ENCODE measurements at regions of chr3 and their contacts with region 1.

Region 1: DNA sequence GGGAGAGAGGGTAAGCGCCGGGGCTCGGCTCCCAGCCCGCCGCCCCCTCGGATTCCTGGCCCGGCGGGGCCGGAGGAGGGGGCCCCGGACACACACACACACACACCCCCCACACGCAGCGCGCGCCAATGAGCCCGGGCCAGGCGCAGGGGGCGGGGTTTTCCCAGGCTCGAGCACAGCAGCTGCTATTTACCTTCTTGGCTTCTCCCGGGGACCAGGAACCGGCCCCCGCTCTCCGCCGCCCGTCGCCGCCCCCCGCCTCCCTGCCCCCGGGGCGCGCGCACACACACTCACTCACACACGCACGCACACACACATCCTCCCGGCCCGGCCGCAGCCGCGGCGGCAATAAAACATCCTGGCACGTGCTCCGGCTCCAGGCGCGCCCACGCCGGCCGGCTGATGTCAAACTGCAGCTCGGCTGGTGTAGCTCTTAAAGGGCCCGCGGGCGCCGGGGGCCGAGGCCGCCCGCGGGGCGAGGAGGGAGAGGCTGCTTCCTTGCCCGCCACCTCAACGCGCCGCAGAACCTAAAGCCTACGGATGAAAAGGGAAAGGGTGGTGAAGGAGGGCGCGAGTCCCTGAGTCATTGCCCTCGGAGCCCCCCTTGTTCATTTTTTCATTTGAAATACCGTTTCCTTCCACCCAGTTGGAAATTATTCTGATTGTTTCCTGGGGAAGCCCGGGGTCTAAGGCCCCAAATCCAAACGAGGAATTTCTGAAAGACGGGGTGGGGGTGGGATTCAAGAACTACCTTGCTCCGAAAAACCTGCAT is 1.0 kb upstream of the HES1 start:
- DNase-seq: peak; percentile 66 to 84 (median 82)
- ATAC-seq: peak; percentile 79
- H3K4me3 ChIP-seq: peak overlapping the region; percentile 53
- H3K4me3 Mint-ChIP-seq: peak overlapping the region; percentile 84 to 93 (median 90)
- H3K27ac ChIP-seq: peak overlapping the region; percentile 8
- H3K27ac Mint-ChIP-seq: peak overlapping the region in 8 of 9 donors; percentile 79 to 94 (median 92)
- H3K4me1 ChIP-seq: peaks cover 25 to 42% of the 10 kb centered on the region in 2 donors
- H3K4me1 Mint-ChIP-seq: peaks cover 41 to 66% (median 50%) of the 10 kb centered on the region in 7 donors
- H3K27me3 ChIP-seq: peaks cover 6 to 8% of the 10 kb centered on the region in 2 donors
- H3K27me3 Mint-ChIP-seq: peaks cover 0 to 80% (median 34%) of the 10 kb centered on the region in 5 donors

Region 2: DNA sequence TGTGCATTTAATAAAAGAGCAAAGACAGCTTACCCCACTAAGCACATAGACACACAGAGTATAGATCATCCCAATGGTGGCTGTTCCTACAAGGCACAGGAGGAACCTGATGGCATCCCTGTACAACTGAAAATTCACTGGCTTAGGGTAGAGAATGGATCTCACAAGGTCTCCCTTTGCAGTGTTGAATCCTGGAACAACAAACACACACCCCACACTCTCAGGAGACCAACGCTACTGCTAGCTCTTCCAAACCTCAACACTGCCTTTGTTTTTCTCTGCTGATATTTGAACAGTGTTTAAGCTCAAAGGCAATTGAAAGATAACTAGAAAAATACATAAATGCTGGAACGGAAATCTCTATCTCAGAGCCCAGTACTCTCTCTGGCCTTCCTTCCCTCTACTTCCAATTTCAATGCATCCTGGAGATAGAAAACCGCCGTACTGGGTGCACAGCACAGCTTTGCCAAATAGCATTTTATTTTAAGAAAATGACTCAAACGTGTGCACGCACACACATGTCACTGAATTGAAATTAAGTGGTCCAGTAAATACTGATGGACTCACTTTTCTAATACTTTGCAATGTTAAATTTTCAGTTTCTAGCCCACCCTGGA is 668.8 kb before region 1 on chr3:
- CTCF ChIA-PET with region 1: no interaction called
- POLR2A ChIA-PET with region 1: no interaction called
- intact Hi-C with region 1: loop called in 1 of 2 experiments (anchors 5 kb)
- DNase-seq: no peak
- ATAC-seq: no peak
- H3K4me3 ChIP-seq: no peak overlapping the region
- H3K4me3 Mint-ChIP-seq: no peak overlapping the region
- H3K27ac ChIP-seq: no peak overlapping the region
- H3K27ac Mint-ChIP-seq: no peak overlapping the region
- H3K4me1 ChIP-seq: no peaks in the 10 kb centered on the region
- H3K4me1 Mint-ChIP-seq: peaks cover 0 to 6% (median 0%) of the 10 kb centered on the region in 7 donors
- H3K27me3 ChIP-seq: no peaks in the 10 kb centered on the region
- H3K27me3 Mint-ChIP-seq: no peaks in the 10 kb centered on the region

Region 3: DNA sequence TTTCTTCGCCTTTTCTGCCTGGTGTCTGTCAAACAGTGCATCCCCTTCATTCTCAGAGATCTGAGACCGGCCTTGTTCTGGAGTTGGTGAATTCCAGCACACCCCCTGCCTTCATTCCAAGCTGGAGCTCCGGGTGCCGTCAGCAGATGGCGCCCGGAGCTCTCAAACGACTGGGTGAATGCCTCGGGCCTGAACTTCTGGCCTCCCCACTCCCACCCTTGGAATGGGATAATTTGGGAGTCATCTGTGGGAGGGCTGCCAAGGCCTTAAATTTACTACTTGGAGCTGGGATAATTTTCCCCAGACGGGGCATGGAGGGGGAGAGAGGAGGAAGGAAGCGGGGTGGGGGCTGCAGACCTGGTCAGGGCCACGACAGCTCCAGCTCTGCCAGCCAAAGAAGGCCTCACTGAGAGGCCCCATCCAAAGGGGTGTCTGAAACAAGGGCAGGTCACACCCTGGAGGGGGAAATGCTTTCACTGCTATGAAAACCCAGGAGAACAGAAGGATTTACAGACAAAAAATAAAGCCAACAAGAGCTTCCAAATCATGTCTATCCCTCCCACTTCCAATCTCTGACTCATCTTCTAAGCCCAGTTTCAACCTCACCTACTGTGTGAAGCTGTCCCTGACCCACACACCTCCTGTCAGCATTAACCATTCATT is 354.0 kb before region 1 on chr3:
- CTCF ChIA-PET with region 1: interaction called, 5 read pairs
- POLR2A ChIA-PET with region 1: interaction called, 3 read pairs
- intact Hi-C with region 1: loop called (anchors 1 to 5 kb)
- DNase-seq: peak in 2 of 9 donors; percentile 4 to 13
- ATAC-seq: no peak
- H3K4me3 ChIP-seq: no peak overlapping the region
- H3K4me3 Mint-ChIP-seq: no peak overlapping the region
- H3K27ac ChIP-seq: no peak overlapping the region
- H3K27ac Mint-ChIP-seq: peak overlapping the region in 1 of 9 donors; percentile 45
- H3K4me1 ChIP-seq: peaks cover 0 to 5% of the 10 kb centered on the region in 2 donors
- H3K4me1 Mint-ChIP-seq: peaks cover 4 to 35% (median 9%) of the 10 kb centered on the region in 7 donors
- H3K27me3 ChIP-seq: peaks cover 0 to 3% of the 10 kb centered on the region in 2 donors
- H3K27me3 Mint-ChIP-seq: peaks cover 21 to 60% (median 37%) of the 10 kb centered on the region in 5 donors

Region 4: GRCh38 chr3:194070634-194071409 is 64.1 kb before region 1 on chr3:
- CTCF ChIA-PET with region 1: no interaction called
- POLR2A ChIA-PET with region 1: no interaction called
- intact Hi-C with region 1: loop called (anchors 2 kb)
- DNase-seq: peak; percentile 26 to 80 (median 49)
- ATAC-seq: peak; percentile 89
- H3K4me3 ChIP-seq: peak overlapping the region; percentile 40
- H3K4me3 Mint-ChIP-seq: peak overlapping the region; percentile 64 to 84 (median 80)
- H3K27ac ChIP-seq: no peak overlapping the region
- H3K27ac Mint-ChIP-seq: peak overlapping the region in 1 of 9 donors; percentile 32
- H3K4me1 ChIP-seq: peaks cover 0 to 9% of the 10 kb centered on the region in 2 donors
- H3K4me1 Mint-ChIP-seq: peaks cover 0 to 20% (median 14%) of the 10 kb centered on the region in 7 donors
- H3K27me3 ChIP-seq: no peaks in the 10 kb centered on the region
- H3K27me3 Mint-ChIP-seq: peaks cover 0 to 79% (median 17%) of the 10 kb centered on the region in 5 donors

Region 5: GRCh38 chr3:194095464-194095863 is 39.5 kb before region 1 on chr3:
- CTCF ChIA-PET with region 1: no interaction called
- POLR2A ChIA-PET with region 1: no interaction called
- intact Hi-C with region 1: no loop called
- DNase-seq: peak in 4 of 9 donors; percentile 9 to 28 (median 21)
- ATAC-seq: no peak
- H3K4me3 ChIP-seq: no peak overlapping the region
- H3K4me3 Mint-ChIP-seq: peak overlapping the region in 3 of 10 donors; percentile 2 to 53 (median 19)
- H3K27ac ChIP-seq: no peak overlapping the region
- H3K27ac Mint-ChIP-seq: peak overlapping the region in 7 of 9 donors; percentile 10 to 64 (median 33)
- H3K4me1 ChIP-seq: peaks cover 0 to 10% of the 10 kb centered on the region in 2 donors
- H3K4me1 Mint-ChIP-seq: peaks cover 8 to 40% (median 13%) of the 10 kb centered on the region in 7 donors
- H3K27me3 ChIP-seq: no peaks in the 10 kb centered on the region
- H3K27me3 Mint-ChIP-seq: peaks cover 0 to 9% (median 0%) of the 10 kb centered on the region in 5 donors

Region 6: DNA sequence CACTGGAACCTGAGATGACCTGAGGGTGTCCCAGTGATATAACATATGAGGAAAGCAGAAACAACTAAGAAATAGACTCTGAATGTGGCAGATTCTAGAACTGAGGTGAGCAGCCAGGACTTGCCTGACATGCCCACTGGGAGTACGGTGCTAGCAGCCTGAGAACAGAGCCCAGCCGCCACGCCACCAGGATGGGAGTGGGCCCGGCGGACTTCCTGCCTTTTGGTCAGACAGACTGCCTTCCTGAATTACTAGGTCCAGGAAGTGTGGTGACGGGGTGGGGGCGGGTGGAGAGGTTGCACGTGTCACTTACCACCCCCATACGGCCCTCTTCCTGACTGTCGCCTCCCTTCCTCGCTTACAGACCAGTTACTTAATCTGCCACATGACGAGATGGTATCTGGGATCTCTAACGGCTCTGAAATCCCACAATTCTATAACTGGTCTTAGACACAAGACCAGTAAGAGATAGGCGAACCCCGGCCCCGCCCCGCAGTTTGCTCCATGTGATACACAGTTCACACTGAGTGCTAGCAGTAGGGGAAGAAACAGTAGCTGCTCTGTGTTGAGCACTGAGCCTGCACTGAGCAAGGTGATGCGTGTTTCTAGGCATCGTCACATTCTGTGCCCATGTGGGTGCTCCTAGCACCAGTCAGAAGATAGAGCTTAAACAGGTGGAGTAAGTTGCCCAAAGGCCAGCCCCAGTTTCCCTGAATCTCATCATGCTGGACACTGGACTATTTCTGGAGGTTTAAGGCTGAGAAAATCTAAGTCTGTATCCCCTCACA is 120.5 kb after region 1 on chr3:
- CTCF ChIA-PET with region 1: no interaction called
- POLR2A ChIA-PET with region 1: no interaction called
- intact Hi-C with region 1: loop called in 1 of 2 experiments (anchors 2 kb)
- DNase-seq: peak in 7 of 9 donors; percentile 2 to 41 (median 36)
- ATAC-seq: peak; percentile 88
- H3K4me3 ChIP-seq: peak overlapping the region; percentile 42
- H3K4me3 Mint-ChIP-seq: peak overlapping the region; percentile 65 to 88 (median 82)
- H3K27ac ChIP-seq: peak overlapping the region; percentile 56
- H3K27ac Mint-ChIP-seq: peak overlapping the region; percentile 71 to 93 (median 88)
- H3K4me1 ChIP-seq: peaks cover 0 to 6% of the 10 kb centered on the region in 2 donors
- H3K4me1 Mint-ChIP-seq: peaks cover 13 to 37% (median 25%) of the 10 kb centered on the region in 7 donors
- H3K27me3 ChIP-seq: no peaks in the 10 kb centered on the region
- H3K27me3 Mint-ChIP-seq: peaks cover 0 to 7% (median 0%) of the 10 kb centered on the region in 5 donors

Region 7: GRCh38 chr3:194395778-194396547 is 261.0 kb after region 1 on chr3:
- CTCF ChIA-PET with region 1: no interaction called
- POLR2A ChIA-PET with region 1: interaction called, 3 read pairs
- intact Hi-C with region 1: loop called (anchors 1 to 2 kb)
- DNase-seq: peak; percentile 29 to 86 (median 74)
- ATAC-seq: peak; percentile 85
- H3K4me3 ChIP-seq: peak overlapping the region; percentile 73
- H3K4me3 Mint-ChIP-seq: peak overlapping the region; percentile 82 to 98 (median 90)
- H3K27ac ChIP-seq: peak overlapping the region; percentile 81
- H3K27ac Mint-ChIP-seq: peak overlapping the region; percentile 73 to 98 (median 93)
- H3K4me1 ChIP-seq: peaks cover 4 to 26% of the 10 kb centered on the region in 2 donors
- H3K4me1 Mint-ChIP-seq: peaks cover 34 to 64% (median 47%) of the 10 kb centered on the region in 7 donors
- H3K27me3 ChIP-seq: no peaks in the 10 kb centered on the region
- H3K27me3 Mint-ChIP-seq: peaks cover 0 to 26% (median 0%) of the 10 kb centered on the region in 5 donors

Region 8: GRCh38 chr3:194682694-194683310 is 547.9 kb after region 1 on chr3:
- CTCF ChIA-PET with region 1: no interaction called
- POLR2A ChIA-PET with region 1: no interaction called
- intact Hi-C with region 1: loop called in 1 of 2 experiments (anchors 5 kb)
- DNase-seq: peak; percentile 33 to 75 (median 60)
- ATAC-seq: peak; percentile 77
- H3K4me3 ChIP-seq: no peak overlapping the region
- H3K4me3 Mint-ChIP-seq: peak overlapping the region in 2 of 10 donors; percentile 12 to 25
- H3K27ac ChIP-seq: no peak overlapping the region
- H3K27ac Mint-ChIP-seq: peak overlapping the region in 1 of 9 donors; percentile 25
- H3K4me1 ChIP-seq: peaks cover 12 to 14% of the 10 kb centered on the region in 2 donors
- H3K4me1 Mint-ChIP-seq: peaks cover 10 to 41% (median 28%) of the 10 kb centered on the region in 7 donors
- H3K27me3 ChIP-seq: no peaks in the 10 kb centered on the region
- H3K27me3 Mint-ChIP-seq: peaks cover 0 to 37% (median 0%) of the 10 kb centered on the region in 5 donors

Measured in naive thymus-derived CD4-positive, alpha-beta T cell (primary cell).